Activated T-helper 2 cell treated with anti-CD3 and anti-CD28 coated beads, Interferon-gamma antibody, Interleukin-2, Interleukin-4, amounts not matched to agents 10 μg/mL and 5 μg/mL and 100 μg/mL, durations not matched to agents 14 hours and 24 hours and 36 hours (primary cell): ENCODE measurements at regions of chr3 and their contacts with region 1.

Region 1: GRCh38 chr3:168847291-168847883 is 751.7 kb upstream of the GOLIM4 start:
- DNase-seq: no peak
- H3K4me3 Mint-ChIP-seq: no peak overlapping the region
- H3K27ac Mint-ChIP-seq: no peak overlapping the region
- H3K4me1 Mint-ChIP-seq: peaks cover 1% of the 10 kb centered on the region
- H3K27me3 Mint-ChIP-seq: peaks cover 6% of the 10 kb centered on the region

Region 2: DNA sequence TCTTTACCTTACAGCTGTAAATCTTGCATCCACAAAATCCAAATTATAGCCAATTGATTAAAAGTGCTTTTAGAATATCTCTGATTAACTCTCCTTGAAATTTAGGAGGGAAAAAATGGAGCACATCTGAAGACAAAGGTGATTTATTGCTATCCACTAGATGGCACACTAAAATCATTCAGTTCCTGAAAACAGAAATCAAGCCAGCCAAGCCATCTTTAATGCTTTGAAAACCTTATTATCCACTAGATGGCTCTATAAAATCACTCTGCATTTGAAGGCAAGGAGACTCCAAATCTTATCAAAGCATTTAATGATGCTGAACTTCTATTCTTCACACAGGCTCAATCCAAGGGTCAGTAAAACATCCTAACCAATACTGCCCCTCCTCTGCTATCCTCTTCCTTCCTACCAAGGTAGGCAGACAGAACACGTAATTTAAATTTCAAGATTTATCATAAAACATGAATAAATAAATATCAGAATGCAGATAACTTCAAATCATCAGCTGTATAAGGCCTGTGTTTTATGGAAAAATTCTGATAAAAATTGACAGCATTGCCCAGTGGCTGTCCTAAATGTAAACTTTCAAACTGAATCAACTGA is 800.1 kb before region 1 on chr3:
- intact Hi-C with region 1: loop called (anchors 10 kb)
- DNase-seq: no peak
- H3K4me3 Mint-ChIP-seq: no peak overlapping the region
- H3K27ac Mint-ChIP-seq: no peak overlapping the region
- H3K4me1 Mint-ChIP-seq: no peaks in the 10 kb centered on the region
- H3K27me3 Mint-ChIP-seq: peaks cover 1% of the 10 kb centered on the region

Region 3: DNA sequence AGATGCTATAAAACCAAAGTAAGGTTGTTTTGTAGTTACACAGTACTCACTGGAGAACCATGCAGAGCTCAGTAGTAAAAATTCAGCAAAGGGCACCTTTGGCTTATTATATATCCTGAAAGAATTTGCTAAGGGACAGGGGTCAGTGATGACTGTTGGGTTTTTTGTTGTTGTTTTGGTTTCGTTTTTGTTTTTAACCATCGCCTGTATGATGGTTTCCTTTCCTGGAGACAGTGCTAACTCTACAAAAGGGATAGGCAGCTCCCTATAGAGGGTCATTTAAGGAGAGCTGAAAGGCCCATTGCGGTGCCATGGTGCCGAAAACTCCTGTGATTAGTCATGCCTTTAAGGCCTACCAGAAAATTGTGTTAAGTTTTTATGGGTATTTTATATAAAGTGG is 633.5 kb before region 1 on chr3:
- intact Hi-C with region 1: loop called (anchors 1 kb)
- DNase-seq: no peak
- H3K4me3 Mint-ChIP-seq: no peak overlapping the region
- H3K27ac Mint-ChIP-seq: no peak overlapping the region
- H3K4me1 Mint-ChIP-seq: peaks cover 8% of the 10 kb centered on the region
- H3K27me3 Mint-ChIP-seq: peaks cover 2% of the 10 kb centered on the region

Region 4: DNA sequence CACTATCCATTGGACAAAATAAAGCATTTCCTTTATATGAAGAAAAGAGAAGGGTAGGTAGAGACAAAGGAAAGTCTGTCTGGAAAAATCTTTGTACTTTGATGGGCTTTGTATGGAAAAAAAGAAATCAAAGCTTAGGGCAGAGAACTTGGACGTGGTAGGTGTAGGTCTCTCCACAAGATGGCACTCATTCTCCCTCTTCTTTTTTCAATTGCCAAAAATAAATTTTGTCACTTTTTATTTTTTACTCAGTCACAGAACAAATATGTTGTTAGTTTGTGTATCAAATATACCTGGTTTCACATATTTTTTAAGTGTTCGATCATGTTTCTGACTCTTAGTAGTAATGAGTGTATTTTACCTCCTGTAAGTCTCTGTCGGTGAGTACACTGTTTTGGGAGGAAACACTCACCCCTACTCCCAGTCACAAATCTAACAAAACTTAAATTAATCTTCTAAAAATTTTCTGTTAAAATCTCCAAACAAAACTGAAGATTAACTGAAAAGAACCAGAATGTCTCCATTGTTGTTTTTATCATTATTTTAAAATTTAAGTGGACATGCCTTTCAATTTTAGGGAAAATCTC is 335.9 kb before region 1 on chr3:
- intact Hi-C with region 1: loop called (anchors 5 kb)
- DNase-seq: no peak
- H3K4me3 Mint-ChIP-seq: no peak overlapping the region
- H3K27ac Mint-ChIP-seq: no peak overlapping the region
- H3K4me1 Mint-ChIP-seq: no peaks in the 10 kb centered on the region
- H3K27me3 Mint-ChIP-seq: no peaks in the 10 kb centered on the region